ENCODE measurements at regions of chr9 and their contacts with region 1.

Region 1: GRCh38 chr9:133726401-133727276 is 11.5 kb downstream of the SARDH start:
- DNase-seq: peak; percentile 65 to 66
- H3K4me3 ChIP-seq: no peak overlapping the region
- H3K27ac ChIP-seq: no peak overlapping the region
- H3K4me1 ChIP-seq: no peaks in the 10 kb centered on the region
- H3K27me3 ChIP-seq: no peaks in the 10 kb centered on the region
- CTCF ChIP-seq: peak; percentile 10 to 60 (median 44)
- POLR2A ChIP-seq: no peak

Region 2: GRCh38 chr9:133589454-133590227 is 137.0 kb before region 1 on chr9:
- intact Hi-C with region 1: loop called (anchors 10 kb)
- DNase-seq: no peak
- H3K4me3 ChIP-seq: no peak overlapping the region
- H3K27ac ChIP-seq: no peak overlapping the region
- H3K4me1 ChIP-seq: peaks cover 0 to 6% of the 10 kb centered on the region in 2 donors
- H3K27me3 ChIP-seq: peaks cover 3% of the 10 kb centered on the region
- CTCF ChIP-seq: peak in 3 of 6 experiments; percentile 18 to 40 (median 25)
- POLR2A ChIP-seq: no peak

Region 3: GRCh38 chr9:133634081-133634691 is 92.5 kb before region 1 on chr9:
- intact Hi-C with region 1: no loop called
- DNase-seq: no peak
- H3K4me3 ChIP-seq: no peak overlapping the region
- H3K27ac ChIP-seq: no peak overlapping the region
- H3K4me1 ChIP-seq: no peaks in the 10 kb centered on the region
- H3K27me3 ChIP-seq: no peaks in the 10 kb centered on the region
- CTCF ChIP-seq: no peak
- POLR2A ChIP-seq: no peak